Activated B cell treated with CpG ODN at 0.5 μM for 24 hours (primary cell): ENCODE measurements at regions of chr17 and their contacts with region 1.

Region 1: DNA sequence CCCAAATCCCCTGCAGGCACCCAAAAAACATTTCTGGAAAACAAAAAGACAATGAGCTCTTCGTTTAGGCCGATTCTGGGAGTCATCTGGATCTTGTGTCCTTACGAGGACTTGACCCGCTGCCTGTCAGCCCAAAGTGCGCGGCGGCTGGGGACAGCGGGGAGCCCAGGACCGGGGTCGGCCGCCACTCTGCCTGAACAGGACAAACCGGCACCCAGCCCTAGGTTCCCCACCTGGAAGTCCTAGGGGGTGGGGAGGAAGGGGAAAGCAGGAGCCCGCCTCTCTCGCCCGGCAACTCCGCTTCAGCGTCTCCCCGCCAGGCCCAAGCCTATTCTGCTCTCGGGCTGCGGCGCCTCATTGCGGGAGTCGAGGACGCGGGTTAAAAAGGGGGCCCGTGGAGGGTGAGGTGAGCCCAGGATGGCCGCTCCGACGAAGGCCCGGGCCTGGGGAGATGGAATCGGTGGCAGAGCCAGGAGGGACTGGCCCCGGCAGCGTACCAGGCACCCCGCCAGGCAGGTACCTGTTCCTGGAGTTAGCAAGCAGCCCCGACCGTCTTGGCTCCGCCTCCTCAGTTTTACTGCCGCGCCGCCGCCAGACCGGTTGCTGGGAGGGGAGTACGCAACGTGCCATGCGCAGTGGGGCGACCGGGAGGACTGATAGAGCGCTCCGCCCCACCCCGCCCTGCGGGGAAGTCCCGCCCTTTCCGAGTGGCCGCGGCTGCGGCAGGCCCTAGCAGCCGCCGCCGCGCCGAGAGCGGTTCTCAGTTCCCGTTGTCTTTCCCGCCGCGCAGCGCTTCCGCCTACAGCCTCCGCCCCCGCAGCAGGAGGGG is at the start of gene STRADA:
- DNase-seq: peak; percentile 99
- ATAC-seq: peak; percentile 86
- H3K4me3 Mint-ChIP-seq: peak within 1 kb of the TSS; percentile 86
- H3K27ac Mint-ChIP-seq: peak within 1 kb of the TSS; percentile 96
- H3K4me1 Mint-ChIP-seq: peaks cover 28% of the 10 kb centered on the region
- H3K27me3 Mint-ChIP-seq: no peaks in the 10 kb centered on the region
- CTCF ChIP-seq: no peak
- total RNA-seq, gene STRADA: 72.5 and 80.2 TPM in 2 replicates

Region 2: GRCh38 chr17:63549946-63550807 is 191.3 kb before region 1 on chr17 and contains the start of gene DCAF7:
- CTCF ChIA-PET with region 1: no interaction called
- POLR2A ChIA-PET with region 1: interaction called, 8 read pairs
- intact Hi-C with region 1: loop called (anchors 1 kb)
- DNase-seq: peak; percentile 94
- ATAC-seq: peak; percentile 94
- H3K4me3 Mint-ChIP-seq: peak within 1 kb of the TSS; percentile 99
- H3K27ac Mint-ChIP-seq: peak within 1 kb of the TSS; percentile 95
- H3K4me1 Mint-ChIP-seq: peaks cover 56% of the 10 kb centered on the region
- H3K27me3 Mint-ChIP-seq: no peaks in the 10 kb centered on the region
- CTCF ChIP-seq: no peak
- total RNA-seq, gene DCAF7: 91.9 and 103 TPM in 2 replicates

Region 3: GRCh38 chr17:63751806-63752205 is 10.4 kb after region 1 on chr17:
- CTCF ChIA-PET with region 1: no interaction called
- POLR2A ChIA-PET with region 1: interaction called, 14 read pairs
- intact Hi-C with region 1: loop called (anchors 1 kb)
- DNase-seq: no peak
- ATAC-seq: peak; percentile 77
- H3K4me3 Mint-ChIP-seq: peak overlapping the region; percentile 48
- H3K27ac Mint-ChIP-seq: peak overlapping the region; percentile 77
- H3K4me1 Mint-ChIP-seq: peaks cover 9% of the 10 kb centered on the region
- H3K27me3 Mint-ChIP-seq: no peaks in the 10 kb centered on the region
- CTCF ChIP-seq: no peak

Region 4: GRCh38 chr17:63760771-63761539 is 19.5 kb after region 1 on chr17:
- CTCF ChIA-PET with region 1: interaction called, 3 read pairs
- POLR2A ChIA-PET with region 1: interaction called, 17 read pairs
- intact Hi-C with region 1: loop called (anchors 2 kb)
- DNase-seq: no peak
- ATAC-seq: peak; percentile 60
- H3K4me3 Mint-ChIP-seq: peak overlapping the region; percentile 0
- H3K27ac Mint-ChIP-seq: peak overlapping the region; percentile 32
- H3K4me1 Mint-ChIP-seq: peaks cover 21% of the 10 kb centered on the region
- H3K27me3 Mint-ChIP-seq: no peaks in the 10 kb centered on the region
- CTCF ChIP-seq: no peak

Region 5: DNA sequence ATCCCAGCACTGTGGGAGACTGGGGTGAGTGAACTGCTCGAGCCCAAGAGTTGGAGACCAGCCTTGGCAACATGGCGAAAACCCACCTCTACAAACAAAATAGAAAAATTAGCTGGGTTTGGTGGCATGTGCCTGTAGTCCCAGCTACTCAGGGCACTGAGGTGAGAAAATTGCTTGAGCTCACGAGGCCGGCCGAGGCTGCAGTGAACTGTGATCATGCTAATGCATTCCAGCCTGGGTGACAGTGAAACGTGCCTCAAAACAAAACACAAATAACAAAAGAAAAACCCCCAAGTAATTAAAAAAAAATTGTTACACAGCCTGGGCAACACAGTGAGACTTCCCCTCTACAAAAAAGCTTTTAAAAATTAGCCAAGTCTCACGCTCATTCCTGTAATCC is 27.0 kb after region 1 on chr17:
- CTCF ChIA-PET with region 1: interaction called, 6 read pairs
- POLR2A ChIA-PET with region 1: interaction called, 256 read pairs
- intact Hi-C with region 1: loop called (anchors 1 kb)
- DNase-seq: no peak
- ATAC-seq: no peak
- H3K4me3 Mint-ChIP-seq: no peak overlapping the region
- H3K27ac Mint-ChIP-seq: peak overlapping the region; percentile 56
- H3K4me1 Mint-ChIP-seq: peaks cover 43% of the 10 kb centered on the region
- H3K27me3 Mint-ChIP-seq: no peaks in the 10 kb centered on the region
- CTCF ChIP-seq: no peak

Region 6: DNA sequence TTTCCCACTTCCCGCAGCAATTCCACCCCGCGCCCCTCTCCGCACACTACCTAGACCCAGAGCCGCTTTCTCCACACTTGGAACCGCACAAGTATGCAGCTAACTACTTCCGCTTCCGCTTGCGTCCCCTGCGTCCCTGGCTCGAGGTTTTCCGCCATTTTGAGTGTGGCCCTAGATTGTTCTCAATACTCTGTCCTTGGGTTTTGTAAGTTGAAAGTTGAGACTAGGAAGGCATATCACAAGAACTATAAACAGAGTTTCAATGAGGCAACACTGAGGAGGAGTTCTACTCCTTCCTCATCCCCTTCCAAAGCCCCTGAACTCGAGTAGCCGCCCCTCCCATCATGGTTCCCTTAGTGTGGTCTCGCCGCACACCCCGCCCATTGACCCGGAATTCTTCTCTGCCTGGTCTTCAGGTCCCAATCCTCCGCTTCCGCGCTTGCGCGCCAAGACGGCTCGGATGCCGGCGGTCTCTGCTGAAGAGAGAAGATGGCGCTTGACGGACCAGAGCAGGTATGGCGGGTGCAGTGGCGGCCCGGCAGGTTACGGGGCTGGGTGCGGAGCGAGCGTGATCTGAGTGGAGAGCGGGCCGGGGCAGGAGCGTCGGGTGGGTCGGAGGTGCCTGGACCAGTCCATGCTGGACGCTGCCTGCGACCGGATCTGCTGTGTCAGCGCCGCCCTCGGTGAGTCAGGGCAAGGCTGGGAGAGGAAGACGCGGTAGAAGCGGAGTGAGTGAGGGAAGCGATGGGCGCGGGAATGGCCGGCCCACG is 85.8 kb after region 1 on chr17 and contains the starts of genes FTSJ3 and PSMC5:
- CTCF ChIA-PET with region 1: no interaction called
- POLR2A ChIA-PET with region 1: interaction called, 13 read pairs
- intact Hi-C with region 1: loop called (anchors 1 kb)
- DNase-seq: peak; percentile 90
- ATAC-seq: peak; percentile 95
- H3K4me3 Mint-ChIP-seq: peak within 1 kb of the TSS; percentile 98
- H3K27ac Mint-ChIP-seq: peak within 1 kb of the TSS; percentile 100
- H3K4me1 Mint-ChIP-seq: peaks cover 75% of the 10 kb centered on the region
- H3K27me3 Mint-ChIP-seq: no peaks in the 10 kb centered on the region
- CTCF ChIP-seq: no peak
- total RNA-seq, gene FTSJ3: 82.0 and 85.1 TPM in 2 replicates
- total RNA-seq, gene PSMC5: 157 TPM in 2 replicates

Region 7: DNA sequence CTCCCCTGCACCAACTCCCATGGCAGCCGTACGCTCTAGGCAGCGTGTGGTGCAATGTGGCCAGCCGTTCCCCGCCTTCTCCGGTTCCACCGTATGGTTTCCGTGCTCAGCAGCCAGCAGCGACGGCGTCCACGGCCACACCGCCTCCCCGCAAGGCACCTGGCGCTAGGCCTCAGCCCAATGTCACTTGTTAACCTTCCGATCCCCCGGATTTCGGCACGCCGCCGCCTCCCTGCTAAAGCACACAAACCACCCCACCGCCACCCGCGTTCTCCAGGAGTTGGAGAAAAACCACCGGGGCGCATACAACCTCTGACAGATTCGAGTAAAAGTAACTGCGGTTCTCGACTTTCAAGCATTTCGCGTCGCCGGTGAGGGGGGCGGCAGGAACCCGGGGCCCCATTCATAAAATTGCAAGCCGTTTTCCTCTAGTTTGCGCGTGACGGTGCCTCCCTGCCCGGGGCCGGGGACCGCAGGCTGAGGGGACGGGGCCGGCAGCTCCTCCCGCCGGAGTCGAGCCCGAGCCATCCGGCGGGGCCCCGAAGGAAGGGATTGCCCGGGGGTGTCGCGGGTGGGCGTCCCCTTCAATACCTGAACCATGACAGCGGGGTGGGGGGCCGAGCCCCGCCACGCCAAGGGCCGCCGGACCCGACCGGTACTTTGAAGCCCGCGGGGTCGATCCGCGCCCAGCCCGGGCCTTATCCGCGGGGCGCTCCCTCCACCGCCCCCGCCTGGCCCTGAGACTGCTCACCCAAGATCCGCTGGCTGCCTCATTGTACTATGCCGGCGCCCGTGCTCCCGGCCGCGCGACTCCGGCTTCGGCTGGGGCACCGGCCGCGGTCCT is 521.2 kb after region 1 on chr17 and contains the start of gene TEX2:
- CTCF ChIA-PET with region 1: no interaction called
- POLR2A ChIA-PET with region 1: no interaction called
- intact Hi-C with region 1: loop called (anchors 5 kb)
- DNase-seq: peak; percentile 43
- ATAC-seq: peak; percentile 25
- H3K4me3 Mint-ChIP-seq: peak within 1 kb of the TSS; percentile 88
- H3K27ac Mint-ChIP-seq: peak within 1 kb of the TSS; percentile 80
- H3K4me1 Mint-ChIP-seq: peaks cover 19% of the 10 kb centered on the region
- H3K27me3 Mint-ChIP-seq: peaks cover 10% of the 10 kb centered on the region
- CTCF ChIP-seq: no peak
- total RNA-seq, gene TEX2: 8.1 TPM in 2 replicates